ENCODE measurements at regions of chr10 and their contacts with region 1.

Region 1: DNA sequence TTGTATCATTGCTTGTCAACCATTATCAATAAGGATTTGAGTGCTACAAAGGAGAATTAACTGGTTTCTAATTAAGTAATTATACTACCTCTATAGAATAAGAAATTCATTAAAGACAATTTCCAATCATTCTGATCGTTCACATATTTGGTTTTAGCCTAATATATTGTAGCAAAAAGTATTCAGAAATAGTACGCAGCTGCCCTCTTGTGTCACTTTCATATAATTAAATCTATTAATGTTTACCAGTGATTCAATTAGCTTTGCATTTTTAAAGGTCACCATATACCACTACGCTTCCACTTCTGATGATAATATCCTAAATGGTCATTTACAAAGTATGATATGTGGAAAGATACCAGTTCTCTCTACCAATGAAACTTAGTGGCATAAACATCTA is 128.3 kb downstream of the NEBL start:
- DNase-seq: no peak
- ATAC-seq: peak in 1 of 4 donors; percentile 40
- H3K4me3 ChIP-seq: no peak overlapping the region
- H3K27ac ChIP-seq: no peak overlapping the region
- H3K4me1 ChIP-seq: peaks cover 0 to 11% (median 0%) of the 10 kb centered on the region in 12 donors
- H3K27me3 ChIP-seq: no peaks in the 10 kb centered on the region
- CTCF ChIP-seq: peak; percentile 31 to 74 (median 58)
- POLR2A ChIP-seq: no peak

Region 2: DNA sequence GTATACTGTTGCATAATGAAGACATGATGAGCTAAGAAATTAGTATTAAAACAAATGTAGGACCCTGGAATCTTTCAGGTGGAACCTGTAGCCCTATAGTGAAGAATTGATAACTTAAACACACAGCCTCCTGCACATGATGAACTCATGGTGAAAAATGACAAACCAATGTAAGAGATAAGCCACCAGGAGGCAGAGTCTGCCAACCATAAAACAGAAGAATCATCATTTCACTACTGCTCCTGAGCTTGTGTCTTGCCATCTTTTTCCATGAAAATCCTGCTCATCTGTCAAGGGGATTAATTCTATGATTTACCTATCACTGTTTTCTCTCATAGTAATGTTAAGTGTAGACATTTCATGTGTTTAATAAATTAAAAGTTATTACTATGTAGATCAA is 1356.3 kb before region 1 on chr10:
- intact Hi-C with region 1: loop called in 2 of 10 experiments (anchors 5 kb)
- DNase-seq: no peak
- ATAC-seq: no peak
- H3K4me3 ChIP-seq: no peak overlapping the region
- H3K27ac ChIP-seq: no peak overlapping the region
- H3K4me1 ChIP-seq: no peaks in the 10 kb centered on the region
- H3K27me3 ChIP-seq: no peaks in the 10 kb centered on the region
- CTCF ChIP-seq: peak in 11 of 12 donors; percentile 11 to 47 (median 35)
- POLR2A ChIP-seq: no peak

Region 3: GRCh38 chr10:20616918-20617810 is 151.7 kb before region 1 on chr10:
- intact Hi-C with region 1: loop called in 4 of 10 experiments (anchors 10 kb)
- DNase-seq: peak in 1 of 5 donors; percentile 19
- ATAC-seq: peak in 3 of 4 donors; percentile 16 to 83 (median 66)
- H3K4me3 ChIP-seq: peak overlapping the region in 1 of 12 donors; percentile 3
- H3K27ac ChIP-seq: peak overlapping the region in 1 of 12 donors; percentile 40
- H3K4me1 ChIP-seq: peaks cover 0 to 10% (median 0%) of the 10 kb centered on the region in 12 donors
- H3K27me3 ChIP-seq: no peaks in the 10 kb centered on the region
- CTCF ChIP-seq: no peak
- POLR2A ChIP-seq: no peak

Region 4: DNA sequence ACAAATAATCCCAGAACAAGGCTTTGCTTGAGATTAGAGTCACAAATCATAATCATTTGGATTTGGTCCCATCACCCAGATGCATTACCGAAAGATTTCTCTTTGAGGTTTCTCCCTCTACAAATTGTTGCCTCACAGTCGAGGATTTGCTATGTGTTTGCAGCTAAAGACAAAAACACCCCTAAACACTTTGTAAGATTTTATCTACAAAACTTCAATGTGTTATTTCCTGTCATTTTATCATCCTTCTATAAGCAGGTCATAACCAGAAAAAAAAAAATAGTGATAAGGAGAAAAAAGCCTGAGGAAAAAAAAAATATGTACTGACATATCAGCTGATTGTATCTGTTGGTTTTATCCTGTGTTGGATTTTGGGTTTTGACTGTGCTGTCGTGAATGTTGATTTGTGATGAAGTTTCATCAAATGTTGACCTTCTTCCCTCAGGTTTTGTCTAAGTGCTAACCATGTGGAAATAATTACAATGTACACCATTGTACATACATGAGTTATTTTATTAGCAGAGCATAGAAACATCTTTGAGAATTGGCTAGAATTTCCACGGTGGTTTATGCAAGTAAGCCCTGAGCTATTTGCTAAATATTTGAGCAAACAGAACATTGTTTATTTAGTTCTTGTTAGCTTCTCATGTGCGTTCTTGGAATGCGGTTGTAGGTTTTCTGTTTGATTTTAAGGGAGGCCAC is 146.2 kb before region 1 on chr10:
- intact Hi-C with region 1: loop called in 4 of 10 experiments (anchors 10 kb)
- DNase-seq: no peak
- ATAC-seq: peak in 2 of 4 donors; percentile 39 to 40
- H3K4me3 ChIP-seq: no peak overlapping the region
- H3K27ac ChIP-seq: peak overlapping the region in 10 of 12 donors; percentile 9 to 69 (median 43)
- H3K4me1 ChIP-seq: peaks cover 0 to 19% (median 6%) of the 10 kb centered on the region in 12 donors
- H3K27me3 ChIP-seq: no peaks in the 10 kb centered on the region
- CTCF ChIP-seq: no peak
- POLR2A ChIP-seq: no peak

Region 5: GRCh38 chr10:20648263-20648874 is 120.5 kb before region 1 on chr10:
- intact Hi-C with region 1: loop called in 1 of 10 experiments (anchors 10 kb)
- DNase-seq: no peak
- ATAC-seq: no peak
- H3K4me3 ChIP-seq: no peak overlapping the region
- H3K27ac ChIP-seq: no peak overlapping the region
- H3K4me1 ChIP-seq: no peaks in the 10 kb centered on the region
- H3K27me3 ChIP-seq: no peaks in the 10 kb centered on the region
- CTCF ChIP-seq: no peak
- POLR2A ChIP-seq: no peak

Region 6: DNA sequence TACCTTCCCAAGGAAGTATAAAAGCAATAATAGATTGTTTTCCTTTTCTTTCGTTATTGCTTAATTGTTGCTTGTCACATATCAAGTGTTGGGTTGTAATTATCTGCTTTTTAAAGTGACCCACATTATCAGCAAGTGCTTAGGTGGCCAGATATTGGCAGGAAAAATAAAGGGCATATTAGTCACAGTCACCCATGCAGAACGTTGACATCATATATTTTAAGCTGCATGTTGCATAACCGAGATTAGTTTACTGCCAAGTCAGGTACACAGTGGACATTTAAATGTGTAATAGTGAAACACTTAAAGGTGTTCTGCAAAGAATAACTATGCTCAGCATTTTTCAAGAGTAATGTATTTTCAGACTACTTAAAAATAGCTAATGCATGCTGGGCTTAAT is 116.8 kb after region 1 on chr10:
- intact Hi-C with region 1: no loop called
- DNase-seq: no peak
- ATAC-seq: peak; percentile 74 to 83 (median 83)
- H3K4me3 ChIP-seq: peak overlapping the region in 3 of 12 donors; percentile 2 to 21 (median 8)
- H3K27ac ChIP-seq: peak overlapping the region in 10 of 12 donors; percentile 48 to 76 (median 58)
- H3K4me1 ChIP-seq: peaks cover 0 to 33% (median 1%) of the 10 kb centered on the region in 12 donors
- H3K27me3 ChIP-seq: no peaks in the 10 kb centered on the region
- CTCF ChIP-seq: no peak
- POLR2A ChIP-seq: no peak

Measured in heart left ventricle (tissue), 16 donors.